Naive thymus-derived CD4-positive, alpha-beta T cell (primary cell): ENCODE measurements at regions of chr16 and their contacts with region 1.

Region 1: GRCh38 chr16:30628627-30629540 is 18.7 kb upstream of the ZNF689 start:
- DNase-seq: peak; percentile 64 to 89 (median 80)
- ATAC-seq: peak; percentile 97
- H3K4me3 ChIP-seq: peak overlapping the region; percentile 51
- H3K4me3 Mint-ChIP-seq: peak overlapping the region; percentile 58 to 85 (median 72)
- H3K27ac ChIP-seq: peak overlapping the region; percentile 60
- H3K27ac Mint-ChIP-seq: peak overlapping the region in 8 of 9 donors; percentile 58 to 89 (median 80)
- H3K4me1 ChIP-seq: peaks cover 0 to 3% of the 10 kb centered on the region in 2 donors
- H3K4me1 Mint-ChIP-seq: peaks cover 4 to 12% (median 8%) of the 10 kb centered on the region in 7 donors
- H3K27me3 ChIP-seq: no peaks in the 10 kb centered on the region
- H3K27me3 Mint-ChIP-seq: peaks cover 0 to under 1% (median 0%) of the 10 kb centered on the region in 5 donors

Region 2: GRCh38 chr16:30378236-30379204 is 250.4 kb before region 1 on chr16:
- CTCF ChIA-PET with region 1: no interaction called
- POLR2A ChIA-PET with region 1: no interaction called
- intact Hi-C with region 1: loop called in 1 of 2 experiments (anchors 1 kb)
- DNase-seq: peak; percentile 97 to 99 (median 99)
- ATAC-seq: peak; percentile 91
- H3K4me3 ChIP-seq: peak overlapping the region; percentile 88
- H3K4me3 Mint-ChIP-seq: peak overlapping the region; percentile 90 to 100 (median 97)
- H3K27ac ChIP-seq: peak overlapping the region; percentile 100
- H3K27ac Mint-ChIP-seq: peak overlapping the region; percentile 98 to 100 (median 100)
- H3K4me1 ChIP-seq: peaks cover 54 to 56% of the 10 kb centered on the region in 2 donors
- H3K4me1 Mint-ChIP-seq: peaks cover 32 to 61% (median 49%) of the 10 kb centered on the region in 7 donors
- H3K27me3 ChIP-seq: no peaks in the 10 kb centered on the region
- H3K27me3 Mint-ChIP-seq: no peaks in the 10 kb centered on the region

Region 3: GRCh38 chr16:30534368-30535105 is 94.3 kb before region 1 on chr16 and contains the start of gene ZNF747:
- CTCF ChIA-PET with region 1: no interaction called
- POLR2A ChIA-PET with region 1: no interaction called
- intact Hi-C with region 1: loop called in 1 of 2 experiments (anchors 1 kb)
- DNase-seq: peak; percentile 84 to 92 (median 89)
- ATAC-seq: peak; percentile 87
- H3K4me3 ChIP-seq: peak within 1 kb of the TSS; percentile 60
- H3K4me3 Mint-ChIP-seq: peak within 1 kb of the TSS; percentile 91 to 100 (median 96)
- H3K27ac ChIP-seq: peak within 1 kb of the TSS; percentile 98
- H3K27ac Mint-ChIP-seq: peak within 1 kb of the TSS; percentile 94 to 99 (median 98)
- H3K4me1 ChIP-seq: peaks cover 8 to 13% of the 10 kb centered on the region in 2 donors
- H3K4me1 Mint-ChIP-seq: peaks cover 14 to 53% (median 43%) of the 10 kb centered on the region in 7 donors
- H3K27me3 ChIP-seq: no peaks in the 10 kb centered on the region
- H3K27me3 Mint-ChIP-seq: no peaks in the 10 kb centered on the region
- total RNA-seq, gene ZNF747: 9.1 to 17.4 (median 13.8) TPM

Region 4: DNA sequence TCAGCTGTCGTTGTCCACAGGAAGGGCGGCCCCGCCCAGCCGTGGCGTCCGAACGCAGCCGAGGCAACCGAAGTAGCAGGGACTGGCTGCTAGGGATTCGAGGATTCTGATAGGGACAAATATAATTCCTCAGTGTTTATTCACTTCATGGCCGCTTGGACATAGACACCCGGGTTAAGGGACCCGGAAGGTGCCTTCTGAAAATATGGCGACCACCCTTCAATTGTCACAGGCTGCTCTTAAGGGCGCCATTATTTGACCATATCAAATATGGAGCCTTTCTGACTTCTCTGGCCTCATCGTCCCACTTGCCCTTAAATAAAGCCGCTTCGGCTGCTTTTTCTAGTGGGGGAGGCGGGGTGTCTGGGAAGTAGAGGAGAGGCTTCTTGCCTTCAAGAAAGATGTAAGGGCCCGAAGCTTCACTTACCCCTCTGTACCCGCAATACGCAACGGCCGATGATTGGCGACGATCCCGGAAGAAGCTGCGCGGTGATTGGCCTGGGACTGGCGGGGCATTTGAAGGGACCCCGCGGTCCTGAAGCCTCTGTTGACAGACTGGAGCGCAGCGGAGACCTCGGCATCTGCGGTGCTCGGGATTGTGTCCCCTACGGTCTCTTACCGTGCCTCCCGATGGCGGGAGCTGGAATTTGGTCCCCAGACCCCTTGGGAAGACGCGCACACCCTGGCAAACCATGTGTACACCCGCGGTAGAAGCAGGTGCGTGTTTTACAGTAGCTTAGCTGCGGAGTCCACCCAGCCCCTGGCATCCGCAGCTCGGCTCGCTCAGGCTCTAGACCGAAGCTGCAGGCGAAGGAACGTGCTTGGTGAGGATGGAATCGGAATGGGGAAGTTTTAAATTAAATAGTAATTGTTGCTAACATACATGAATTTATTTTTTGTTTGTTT is 56.9 kb before region 1 on chr16 and contains the start of gene ZNF688:
- CTCF ChIA-PET with region 1: interaction called, 8 read pairs
- POLR2A ChIA-PET with region 1: interaction called, 6 read pairs
- intact Hi-C with region 1: loop called (anchors 1 kb)
- DNase-seq: peak; percentile 74 to 99 (median 97)
- ATAC-seq: peak; percentile 89
- H3K4me3 ChIP-seq: peak within 1 kb of the TSS; percentile 88
- H3K4me3 Mint-ChIP-seq: peak within 1 kb of the TSS; percentile 87 to 98 (median 90)
- H3K27ac ChIP-seq: peak within 1 kb of the TSS; percentile 94
- H3K27ac Mint-ChIP-seq: peak within 1 kb of the TSS; percentile 92 to 98 (median 95)
- H3K4me1 ChIP-seq: peaks cover 36 to 38% of the 10 kb centered on the region in 2 donors
- H3K4me1 Mint-ChIP-seq: peaks cover 17 to 51% (median 39%) of the 10 kb centered on the region in 7 donors
- H3K27me3 ChIP-seq: no peaks in the 10 kb centered on the region
- H3K27me3 Mint-ChIP-seq: no peaks in the 10 kb centered on the region
- total RNA-seq, gene ZNF688: 8.8 to 24.3 (median 16.3) TPM

Region 5: DNA sequence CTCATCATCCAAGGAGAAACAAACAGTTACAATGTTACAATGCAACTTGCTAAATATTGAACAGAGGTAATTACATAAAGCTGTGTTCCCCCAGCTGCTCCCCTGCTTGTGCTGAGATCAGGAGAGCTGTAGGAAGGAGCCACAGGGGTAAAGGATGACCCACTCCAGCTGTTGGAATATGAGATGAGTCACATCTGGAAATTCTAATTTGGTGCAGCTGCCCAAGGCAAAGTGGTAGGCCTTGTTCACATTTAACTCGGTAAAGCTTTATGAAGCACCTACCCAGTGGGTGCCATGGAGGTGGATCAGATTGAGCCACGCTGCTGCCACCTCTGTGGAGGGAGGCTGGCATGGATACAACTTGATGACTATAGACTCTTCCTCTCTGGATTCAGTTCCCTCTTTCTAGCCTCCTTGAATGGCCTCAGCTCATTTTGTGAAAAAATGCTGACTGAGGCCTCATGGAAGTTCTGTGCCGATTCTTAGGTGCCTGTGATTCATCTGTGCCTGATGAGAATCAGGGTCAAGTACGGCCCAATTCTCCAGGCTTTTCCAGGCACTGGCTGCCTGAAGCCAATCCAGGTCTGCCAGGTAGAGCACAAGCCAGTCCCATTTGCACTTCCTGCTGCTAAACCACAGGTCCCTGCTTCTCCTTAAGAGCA is 26.1 kb before region 1 on chr16:
- CTCF ChIA-PET with region 1: interaction called, 14 read pairs
- POLR2A ChIA-PET with region 1: interaction called, 5 read pairs
- intact Hi-C with region 1: no loop called
- DNase-seq: no peak
- ATAC-seq: peak; percentile 49
- H3K4me3 ChIP-seq: no peak overlapping the region
- H3K4me3 Mint-ChIP-seq: no peak overlapping the region
- H3K27ac ChIP-seq: no peak overlapping the region
- H3K27ac Mint-ChIP-seq: no peak overlapping the region
- H3K4me1 ChIP-seq: no peaks in the 10 kb centered on the region
- H3K4me1 Mint-ChIP-seq: peaks cover 0 to 15% (median 11%) of the 10 kb centered on the region in 7 donors
- H3K27me3 ChIP-seq: no peaks in the 10 kb centered on the region
- H3K27me3 Mint-ChIP-seq: no peaks in the 10 kb centered on the region

Region 6: GRCh38 chr16:30692381-30693064 is 63.6 kb after region 1 on chr16:
- CTCF ChIA-PET with region 1: interaction called, 5 read pairs
- POLR2A ChIA-PET with region 1: interaction called, 4 read pairs
- intact Hi-C with region 1: loop called (anchors 1 kb)
- DNase-seq: no peak
- ATAC-seq: no peak
- H3K4me3 ChIP-seq: no peak overlapping the region
- H3K4me3 Mint-ChIP-seq: no peak overlapping the region
- H3K27ac ChIP-seq: no peak overlapping the region
- H3K27ac Mint-ChIP-seq: peak overlapping the region in 2 of 9 donors; percentile 2 to 20
- H3K4me1 ChIP-seq: peaks cover 3 to 16% of the 10 kb centered on the region in 2 donors
- H3K4me1 Mint-ChIP-seq: peaks cover 15 to 27% (median 21%) of the 10 kb centered on the region in 7 donors
- H3K27me3 ChIP-seq: no peaks in the 10 kb centered on the region
- H3K27me3 Mint-ChIP-seq: no peaks in the 10 kb centered on the region

Region 7: GRCh38 chr16:30775392-30776188 is 146.7 kb after region 1 on chr16:
- CTCF ChIA-PET with region 1: no interaction called
- POLR2A ChIA-PET with region 1: no interaction called
- intact Hi-C with region 1: no loop called
- DNase-seq: peak; percentile 32 to 64 (median 51)
- ATAC-seq: peak; percentile 84
- H3K4me3 ChIP-seq: peak overlapping the region; percentile 57
- H3K4me3 Mint-ChIP-seq: peak overlapping the region; percentile 85 to 97 (median 90)
- H3K27ac ChIP-seq: peak overlapping the region; percentile 62
- H3K27ac Mint-ChIP-seq: peak overlapping the region in 7 of 9 donors; percentile 34 to 95 (median 73)
- H3K4me1 ChIP-seq: peaks cover 0 to 4% of the 10 kb centered on the region in 2 donors
- H3K4me1 Mint-ChIP-seq: peaks cover 15 to 40% (median 25%) of the 10 kb centered on the region in 7 donors
- H3K27me3 ChIP-seq: no peaks in the 10 kb centered on the region
- H3K27me3 Mint-ChIP-seq: peaks cover 0 to 5% (median 0%) of the 10 kb centered on the region in 5 donors